Esophagus squamous epithelium (tissue), 5 donors: ENCODE measurements at regions of chr21 and their contacts with region 1.

Region 1: DNA sequence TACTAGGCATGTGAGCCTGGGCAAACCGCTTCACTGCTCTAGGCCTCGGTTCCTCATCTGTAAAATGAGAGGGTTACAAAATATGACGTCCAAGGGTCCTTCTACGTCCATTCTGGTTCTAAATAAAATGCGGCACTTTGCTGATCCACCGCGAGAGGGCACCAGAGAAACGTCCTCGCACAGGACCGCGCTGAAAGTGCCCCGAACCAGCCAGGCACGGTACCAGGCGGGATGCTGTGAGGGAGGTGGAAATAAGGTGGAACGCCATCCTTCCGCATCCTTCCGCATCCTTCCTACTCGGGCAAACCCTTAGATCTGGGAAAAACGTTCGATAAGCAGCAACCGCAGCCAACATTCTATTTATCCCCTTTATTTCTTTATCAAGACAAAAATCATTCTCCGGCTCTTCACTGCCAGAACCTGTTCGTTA is 60.3 kb upstream of the KRTAP19-8 start:
- DNase-seq: no peak
- H3K4me3 ChIP-seq: no peak overlapping the region
- H3K27ac ChIP-seq: no peak overlapping the region
- H3K4me1 ChIP-seq: peaks cover 0 to 8% (median 0%) of the 10 kb centered on the region in 3 donors
- H3K27me3 ChIP-seq: peaks cover 0 to 11% (median 0%) of the 10 kb centered on the region in 4 donors
- CTCF ChIP-seq: peak; percentile 49 to 83 (median 78)
- POLR2A ChIP-seq: no peak

Region 2: DNA sequence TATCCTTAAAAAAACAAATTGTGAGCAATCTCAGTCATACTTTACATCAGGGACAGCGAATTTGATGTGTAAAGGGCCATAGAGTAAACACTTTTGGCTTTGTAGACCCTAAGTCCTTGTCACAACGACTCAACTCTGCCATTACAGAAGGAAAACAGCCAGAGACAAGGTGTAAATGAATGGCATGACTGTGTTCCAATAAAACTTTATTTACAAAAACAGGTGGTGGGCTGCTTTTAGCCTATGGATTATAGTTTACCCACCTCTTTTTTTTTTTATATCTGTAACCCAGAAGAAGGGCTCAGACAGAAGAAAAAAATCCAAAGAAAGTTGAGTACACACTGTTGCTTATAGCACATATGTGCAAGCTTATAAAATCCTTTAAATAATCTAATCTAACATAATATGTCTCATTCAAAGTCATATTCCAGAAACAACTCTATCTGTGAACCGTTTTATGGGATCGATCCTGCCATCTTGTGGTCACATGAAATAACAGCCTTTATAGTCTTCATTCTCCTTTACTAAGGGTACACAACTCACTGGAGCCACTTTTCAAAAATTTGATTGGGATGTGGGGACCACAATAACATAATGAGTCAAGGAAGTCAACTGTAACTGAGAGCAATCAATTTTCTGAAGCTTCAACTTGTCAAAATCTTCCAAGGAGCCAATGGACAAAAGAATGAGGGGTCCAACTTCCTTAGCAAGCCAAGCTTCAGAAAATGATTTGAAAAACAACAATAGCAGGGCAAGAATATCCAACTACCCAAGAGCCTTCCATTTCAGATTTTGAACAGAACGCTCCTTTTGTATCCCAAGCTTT is 81.9 kb after region 1 on chr21:
- intact Hi-C with region 1: loop called (anchors 5 kb)
- DNase-seq: no peak
- H3K4me3 ChIP-seq: no peak overlapping the region
- H3K27ac ChIP-seq: no peak overlapping the region
- H3K4me1 ChIP-seq: peaks cover 0 to 12% (median 4%) of the 10 kb centered on the region in 3 donors
- H3K27me3 ChIP-seq: no peaks in the 10 kb centered on the region
- CTCF ChIP-seq: peak in 5 of 6 experiments; percentile 33 to 57 (median 41)
- POLR2A ChIP-seq: no peak